Astrocyte of the cerebellum (primary cell): ENCODE measurements at regions of chr15 and their contacts with region 1.

Region 1: DNA sequence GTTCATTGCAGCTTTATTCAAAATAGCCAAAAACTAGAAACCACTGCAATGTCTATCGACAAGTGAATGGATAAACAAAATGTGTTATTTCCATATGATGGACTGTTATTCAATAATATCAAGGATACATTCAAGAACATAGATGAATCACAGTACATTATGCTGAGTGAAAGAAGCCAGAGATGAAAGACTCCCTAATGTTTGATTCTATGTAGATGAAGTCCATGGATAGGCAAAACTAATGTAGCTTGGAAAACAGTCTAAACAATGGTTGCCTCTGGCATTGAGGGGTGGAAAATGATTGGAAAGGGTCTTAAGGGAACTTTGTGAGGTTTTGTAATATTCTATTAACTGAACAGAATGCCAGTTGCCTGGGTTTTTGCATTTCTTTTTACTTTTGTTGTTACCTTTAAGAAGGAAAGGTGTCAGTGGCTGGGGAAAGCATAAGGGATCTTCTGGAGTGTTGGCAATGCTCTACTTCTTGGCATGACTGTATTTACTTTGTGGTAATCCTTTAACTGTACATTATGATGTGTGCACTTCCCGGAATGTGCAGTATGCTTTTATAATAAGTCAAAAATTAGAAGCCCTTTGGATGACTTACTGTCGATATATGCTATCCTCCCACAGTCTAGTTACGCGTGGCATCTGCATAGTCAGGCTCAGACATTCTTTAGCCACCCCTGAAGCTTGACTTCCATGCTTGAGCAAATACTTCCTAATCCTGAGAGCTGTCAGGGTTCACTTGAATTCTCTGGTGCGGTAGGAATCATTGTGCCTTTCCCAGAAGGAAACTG is 20.5 kb upstream of the ATP10A start:
- DNase-seq: peak; percentile 84
- H3K4me3 ChIP-seq: no peak overlapping the region
- CTCF ChIP-seq: no peak

Region 2: GRCh38 chr15:25469377-25469776 is 414.3 kb before region 1 on chr15:
- in situ Hi-C with region 1: no loop called
- DNase-seq: no peak
- H3K4me3 ChIP-seq: no peak overlapping the region
- CTCF ChIP-seq: no peak

Region 3: GRCh38 chr15:25797936-25798901 is 85.4 kb before region 1 on chr15:
- in situ Hi-C with region 1: no loop called
- DNase-seq: no peak
- H3K4me3 ChIP-seq: no peak overlapping the region
- CTCF ChIP-seq: no peak

Region 4: DNA sequence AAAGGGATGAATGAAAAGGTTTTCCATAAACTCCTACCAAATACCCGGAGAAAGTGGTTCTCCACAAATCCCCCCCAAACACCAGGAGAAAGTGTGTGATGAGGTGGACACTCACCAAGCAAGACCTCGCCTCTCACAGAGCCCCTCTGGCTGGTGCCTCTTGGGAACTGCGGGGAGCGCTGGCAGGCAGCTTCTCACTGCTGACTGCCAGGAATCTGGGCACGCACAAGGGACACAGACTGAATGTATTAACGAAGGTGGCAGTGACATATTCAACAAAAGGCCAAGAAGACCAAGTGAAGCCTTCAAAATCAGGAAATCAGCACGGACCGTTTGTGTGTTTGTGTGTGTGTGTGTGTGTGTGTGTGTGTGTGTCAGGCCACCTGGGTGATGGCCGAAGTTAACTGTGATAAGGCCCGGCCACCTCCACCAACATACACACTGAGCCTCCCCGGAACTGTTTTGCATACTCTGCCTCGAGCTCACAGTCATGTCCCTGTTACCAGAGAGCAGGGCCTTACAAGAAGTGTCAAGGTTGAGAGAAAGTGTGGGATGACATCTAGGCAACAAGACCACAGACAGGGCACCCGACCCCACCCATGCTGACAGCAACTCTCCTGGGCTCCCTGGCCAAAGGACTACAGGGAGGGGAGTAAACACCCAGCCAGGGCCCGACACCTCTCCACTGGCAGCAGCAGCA is 38.5 kb before region 1 on chr15:
- in situ Hi-C with region 1: loop called (anchors 5 kb)
- DNase-seq: no peak
- H3K4me3 ChIP-seq: no peak overlapping the region
- CTCF ChIP-seq: no peak